ENCODE measurements at regions of chr15 and their contacts with region 1.

Region 1: GRCh38 chr15:78492872-78493271 is 14.5 kb upstream of the HYKK start:
- DNase-seq: no peak
- CTCF ChIP-seq: no peak

Region 2: GRCh38 chr15:78481917-78482316 is 11.0 kb before region 1 on chr15:
- CTCF ChIA-PET with region 1: interaction called, 10 read pairs
- POLR2A ChIA-PET with region 1: no interaction called
- DNase-seq: no peak
- CTCF ChIP-seq: no peak